Testis (tissue), 5 donors: ENCODE measurements at regions of chr16 and their contacts with region 1.

Region 1: DNA sequence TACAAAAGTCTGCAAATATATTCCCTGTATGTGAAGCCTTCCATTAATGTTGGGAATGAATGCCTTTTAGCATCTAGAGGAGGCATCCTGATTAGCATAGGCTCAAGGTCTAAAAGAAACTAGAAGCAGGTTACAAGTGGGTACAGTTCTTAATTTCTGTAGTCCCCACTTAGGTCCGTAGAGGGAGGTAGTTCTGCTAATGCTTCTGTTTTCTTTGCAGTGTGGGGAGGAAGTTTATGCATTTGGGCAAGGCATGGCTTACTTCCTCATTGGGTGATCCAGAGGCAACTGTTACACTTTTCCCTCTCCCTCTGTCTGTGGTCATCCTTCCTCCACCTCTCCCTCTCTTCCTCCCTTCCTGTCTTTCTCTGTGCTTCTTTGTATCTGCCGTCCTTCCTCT is 108.4 kb upstream of the ZKSCAN2 start:
- DNase-seq: no peak
- H3K4me3 ChIP-seq: no peak overlapping the region
- H3K27ac ChIP-seq: no peak overlapping the region
- H3K4me1 ChIP-seq: no peaks in the 10 kb centered on the region
- H3K27me3 ChIP-seq: no peaks in the 10 kb centered on the region
- CTCF ChIP-seq: no peak
- POLR2A ChIP-seq: no peak

Region 2: GRCh38 chr16:25051406-25052150 is 314.5 kb before region 1 on chr16:
- intact Hi-C with region 1: no loop called
- DNase-seq: no peak
- H3K4me3 ChIP-seq: no peak overlapping the region
- H3K27ac ChIP-seq: peak overlapping the region in 1 of 2 donors; percentile 29
- H3K4me1 ChIP-seq: peaks cover 4% of the 10 kb centered on the region
- H3K27me3 ChIP-seq: no peaks in the 10 kb centered on the region
- CTCF ChIP-seq: no peak
- POLR2A ChIP-seq: no peak

Region 3: GRCh38 chr16:25073854-25074253 is 292.2 kb before region 1 on chr16:
- intact Hi-C with region 1: no loop called
- DNase-seq: no peak
- H3K4me3 ChIP-seq: no peak overlapping the region
- H3K27ac ChIP-seq: no peak overlapping the region
- H3K4me1 ChIP-seq: no peaks in the 10 kb centered on the region
- H3K27me3 ChIP-seq: no peaks in the 10 kb centered on the region
- CTCF ChIP-seq: no peak
- POLR2A ChIP-seq: no peak

Region 4: DNA sequence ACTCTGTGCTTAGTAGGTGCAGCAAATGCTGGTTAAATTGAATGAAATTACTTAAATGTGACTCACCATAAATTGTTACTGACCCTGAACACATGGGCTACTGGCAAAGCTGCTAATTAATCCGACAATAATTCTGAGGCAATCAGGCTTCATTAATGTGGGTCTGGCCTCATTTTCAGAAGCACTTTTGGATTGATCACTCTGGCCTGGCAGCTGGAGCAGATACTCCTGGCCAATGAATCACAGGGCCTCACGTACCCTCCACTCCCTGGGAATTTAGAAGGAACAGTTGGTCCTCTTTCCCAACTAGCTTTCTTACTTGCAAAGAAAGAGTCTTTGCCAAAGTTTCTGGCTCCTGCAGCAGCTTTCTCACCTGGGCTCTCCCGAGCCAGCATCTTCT is 53.6 kb after region 1 on chr16:
- intact Hi-C with region 1: loop called (anchors 10 kb)
- DNase-seq: no peak
- H3K4me3 ChIP-seq: no peak overlapping the region
- H3K27ac ChIP-seq: no peak overlapping the region
- H3K4me1 ChIP-seq: no peaks in the 10 kb centered on the region
- H3K27me3 ChIP-seq: no peaks in the 10 kb centered on the region
- CTCF ChIP-seq: no peak
- POLR2A ChIP-seq: no peak